ENCODE measurements at regions of chr15 and their contacts with region 1.

Region 1: DNA sequence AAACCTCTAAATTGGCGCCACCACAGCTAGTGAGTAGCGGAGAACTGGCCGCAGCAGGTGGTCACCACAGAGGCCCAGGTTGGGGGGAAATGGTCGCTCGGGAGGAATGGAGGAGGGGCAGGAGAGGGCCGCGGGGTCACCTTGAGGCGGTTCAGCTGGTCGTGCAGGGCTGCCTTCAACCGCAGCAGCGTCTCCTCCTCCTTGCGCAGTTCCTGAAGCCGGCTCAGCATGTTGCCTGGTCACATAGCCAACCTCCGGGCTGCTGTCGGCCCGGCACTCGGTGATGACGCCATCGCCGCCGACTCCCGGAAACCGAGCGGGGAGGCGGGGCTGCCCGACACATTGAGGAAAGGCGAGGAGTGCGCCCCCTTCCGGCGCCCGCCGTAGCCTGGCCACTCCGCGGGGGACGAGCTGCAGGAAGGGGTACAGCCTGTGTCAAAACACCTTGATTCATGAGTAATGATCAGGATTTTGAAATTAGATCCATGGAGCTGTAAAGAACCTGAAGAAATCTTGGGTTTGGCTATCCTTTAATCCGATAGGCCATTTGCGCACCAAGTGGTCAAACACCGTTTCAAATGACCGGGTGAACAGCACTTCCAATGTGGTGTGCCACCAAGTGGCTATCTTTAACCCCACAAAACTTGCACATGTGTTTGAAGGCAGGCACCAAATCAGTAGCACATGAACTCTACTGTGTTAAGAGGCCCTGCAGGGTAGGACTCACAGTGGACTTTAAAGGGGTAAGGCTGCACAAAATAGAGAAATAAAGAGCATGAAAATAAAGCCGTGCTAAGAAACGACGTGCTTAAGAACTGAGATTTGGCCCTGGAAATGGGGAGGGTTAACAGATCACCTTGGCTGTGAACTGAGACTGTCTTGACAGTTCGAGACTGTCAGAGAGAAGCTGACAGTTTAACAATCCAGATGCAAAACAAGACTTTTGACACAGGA is at the start of gene SNAPC5:
- DNase-seq: peak; percentile 99
- H3K4me3 Mint-ChIP-seq: peak within 1 kb of the TSS; percentile 88
- H3K27ac Mint-ChIP-seq: peak within 1 kb of the TSS; percentile 92
- H3K4me1 Mint-ChIP-seq: peaks cover 63% of the 10 kb centered on the region
- H3K27me3 Mint-ChIP-seq: no peaks in the 10 kb centered on the region
- total RNA-seq, gene SNAPC5: 23.4 to 25.3 TPM

Region 2: DNA sequence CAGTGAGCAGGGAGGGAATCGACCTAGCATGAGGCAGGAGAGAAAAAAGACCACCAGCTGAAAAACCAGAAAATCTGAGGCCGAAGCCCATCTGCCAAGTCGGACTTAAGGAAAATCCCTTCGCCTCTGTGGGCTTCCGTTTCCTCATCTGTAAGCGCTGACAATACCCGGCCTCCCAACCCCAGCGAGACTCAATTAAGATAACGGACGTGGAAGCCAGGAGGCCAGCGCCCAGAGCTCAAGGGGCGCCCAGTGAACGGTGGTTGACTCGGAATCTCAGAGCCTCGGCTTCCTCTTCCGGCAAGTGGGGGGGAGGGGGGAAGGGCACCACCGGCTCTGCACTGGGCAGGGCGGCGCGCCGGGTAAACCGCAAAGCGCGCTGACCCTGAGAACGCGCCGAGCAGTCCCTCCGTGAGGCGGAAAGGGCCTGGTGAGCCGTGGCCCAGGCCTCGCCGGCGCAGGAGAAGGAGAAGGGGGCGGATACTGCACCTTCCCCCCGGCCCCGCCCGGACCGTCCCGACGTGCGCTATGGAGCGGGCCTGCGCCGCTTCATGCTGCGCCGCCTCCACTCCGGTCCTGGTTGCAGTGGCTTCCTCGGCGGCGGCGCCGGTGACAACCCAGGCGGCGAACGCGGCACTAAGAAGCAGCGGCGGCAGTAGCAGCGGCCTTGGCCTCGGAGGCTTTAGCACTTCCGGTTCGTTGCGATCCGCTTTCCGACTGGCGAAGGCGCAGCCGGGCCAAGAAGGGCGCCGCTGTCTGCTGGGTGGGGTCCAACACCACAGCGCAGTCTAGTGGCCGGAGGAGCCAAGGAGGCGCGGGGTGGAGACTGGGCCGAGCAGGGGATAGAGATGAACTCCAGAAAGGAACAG is 980.5 kb before region 1 on chr15 and contains the start of gene DPP8:
- CTCF ChIA-PET with region 1: no interaction called
- POLR2A ChIA-PET with region 1: no interaction called
- intact Hi-C with region 1: loop called (anchors 1 kb)
- DNase-seq: peak; percentile 97
- H3K4me3 Mint-ChIP-seq: peak within 1 kb of the TSS; percentile 99
- H3K27ac Mint-ChIP-seq: peak within 1 kb of the TSS; percentile 97
- H3K4me1 Mint-ChIP-seq: peaks cover 42% of the 10 kb centered on the region
- H3K27me3 Mint-ChIP-seq: no peaks in the 10 kb centered on the region
- total RNA-seq, gene DPP8: 24.9 to 27.1 TPM

Region 3: DNA sequence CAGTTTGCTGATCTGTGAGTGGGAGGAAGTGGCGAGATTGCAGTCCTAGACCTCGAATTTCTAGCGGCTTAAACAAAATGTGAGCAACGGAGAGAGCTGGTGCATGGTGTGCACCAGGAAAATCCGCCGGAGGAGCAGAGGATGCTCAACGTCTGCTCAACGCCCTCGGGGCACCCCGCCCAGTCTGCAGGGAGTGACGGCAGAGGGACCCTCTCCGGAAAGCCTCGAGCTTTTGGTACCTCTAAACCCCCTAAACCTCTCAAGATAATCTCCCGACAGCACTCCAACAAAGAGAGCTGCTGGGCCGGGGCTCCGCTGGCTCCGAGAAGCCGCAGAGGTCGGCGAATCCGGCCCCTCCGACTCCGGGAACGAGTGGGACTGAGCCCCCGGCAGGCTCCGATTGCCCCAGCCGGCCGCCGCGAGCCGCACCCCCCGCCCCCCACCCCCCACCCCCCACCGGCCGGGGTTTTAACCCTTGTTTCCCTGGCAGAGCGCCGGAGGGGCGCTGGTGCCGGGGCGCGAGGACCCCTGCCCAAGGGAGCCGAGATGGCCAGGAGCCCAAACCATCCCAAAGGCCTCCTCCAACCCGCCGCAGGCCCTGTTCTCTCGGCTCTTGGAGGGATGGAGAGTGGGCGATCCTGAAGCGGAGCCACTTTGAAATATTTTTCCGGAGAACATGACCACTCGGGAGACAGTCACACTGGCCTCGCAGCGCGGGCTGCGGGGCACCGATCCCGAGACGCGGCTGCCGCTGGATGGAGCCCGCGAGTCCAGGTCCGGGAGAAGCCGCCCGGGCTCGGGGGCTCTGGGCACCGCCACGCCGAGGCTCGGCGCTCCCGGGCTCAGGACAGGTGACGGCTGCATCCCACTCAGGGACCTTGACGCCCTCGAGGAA is 245.7 kb before region 1 on chr15:
- CTCF ChIA-PET with region 1: no interaction called
- POLR2A ChIA-PET with region 1: no interaction called
- intact Hi-C with region 1: loop called (anchors 5 kb)
- DNase-seq: peak; percentile 65
- H3K4me3 Mint-ChIP-seq: peak overlapping the region; percentile 60
- H3K27ac Mint-ChIP-seq: no peak overlapping the region
- H3K4me1 Mint-ChIP-seq: peaks cover 9% of the 10 kb centered on the region
- H3K27me3 Mint-ChIP-seq: peaks cover 58% of the 10 kb centered on the region

Region 4: GRCh38 chr15:66293419-66294156 is 204.2 kb before region 1 on chr15 and contains the start of gene DIS3L:
- CTCF ChIA-PET with region 1: interaction called, 3 read pairs
- POLR2A ChIA-PET with region 1: interaction called, 6 read pairs
- intact Hi-C with region 1: loop called (anchors 2 kb)
- DNase-seq: peak; percentile 68
- H3K4me3 Mint-ChIP-seq: peak within 1 kb of the TSS; percentile 84
- H3K27ac Mint-ChIP-seq: peak within 1 kb of the TSS; percentile 89
- H3K4me1 Mint-ChIP-seq: peaks cover 39% of the 10 kb centered on the region
- H3K27me3 Mint-ChIP-seq: no peaks in the 10 kb centered on the region
- total RNA-seq, gene DIS3L: 23.5 to 26.3 TPM

Region 5: GRCh38 chr15:66356345-66357236 is 141.2 kb before region 1 on chr15 and contains the start of gene TIPIN:
- CTCF ChIA-PET with region 1: interaction called, 43 read pairs
- POLR2A ChIA-PET with region 1: interaction called, 26 read pairs
- intact Hi-C with region 1: loop called (anchors 1 kb)
- DNase-seq: peak; percentile 99
- H3K4me3 Mint-ChIP-seq: peak within 1 kb of the TSS; percentile 93
- H3K27ac Mint-ChIP-seq: peak within 1 kb of the TSS; percentile 91
- H3K4me1 Mint-ChIP-seq: peaks cover 25% of the 10 kb centered on the region
- H3K27me3 Mint-ChIP-seq: no peaks in the 10 kb centered on the region
- total RNA-seq, gene TIPIN: 43.2 to 45.9 TPM

Region 6: DNA sequence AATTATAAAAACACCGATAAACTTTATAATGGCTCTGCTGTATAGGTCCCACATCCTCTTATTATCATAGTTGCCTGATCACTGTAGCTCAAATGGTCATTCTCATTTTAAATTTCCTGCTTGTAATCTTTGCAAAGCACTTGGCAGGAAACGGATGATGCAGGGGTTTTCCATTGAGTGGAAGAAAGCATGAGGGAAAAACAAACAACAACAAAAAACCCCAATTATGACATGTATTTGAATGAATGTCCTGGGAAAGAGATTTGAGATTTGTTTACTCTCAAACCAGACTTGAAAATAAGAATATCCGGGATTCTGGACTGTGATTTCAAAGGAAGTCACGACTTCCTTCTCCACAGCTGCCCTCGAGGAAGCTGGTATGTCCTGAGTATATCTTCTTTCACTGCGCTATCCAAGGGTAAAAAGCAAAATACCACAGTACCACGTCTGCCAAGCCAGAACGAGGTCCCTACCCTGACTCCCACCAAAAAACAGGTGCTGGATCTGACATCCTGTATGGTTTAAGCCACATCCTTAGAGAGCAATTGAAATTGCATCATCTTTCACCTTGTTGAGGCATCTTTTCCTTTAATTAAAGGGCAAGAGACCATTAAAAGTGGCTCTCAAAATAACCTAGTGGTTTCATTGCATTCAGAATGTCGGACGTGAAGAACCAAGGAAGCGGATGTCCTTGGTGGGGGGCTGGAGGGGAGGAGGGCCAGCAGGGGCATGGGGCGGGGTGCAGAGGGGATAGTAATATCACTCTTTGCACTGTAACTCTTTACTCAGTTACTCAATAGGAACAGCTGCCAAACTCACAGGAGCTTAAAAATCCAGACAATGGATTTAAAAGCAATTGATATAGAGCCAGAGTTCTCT is 127.8 kb before region 1 on chr15:
- CTCF ChIA-PET with region 1: no interaction called
- POLR2A ChIA-PET with region 1: interaction called, 4 read pairs
- intact Hi-C with region 1: loop called (anchors 5 kb)
- DNase-seq: peak; percentile 66
- H3K4me3 Mint-ChIP-seq: peak overlapping the region; percentile 69
- H3K27ac Mint-ChIP-seq: peak overlapping the region; percentile 98
- H3K4me1 Mint-ChIP-seq: peaks cover 15% of the 10 kb centered on the region
- H3K27me3 Mint-ChIP-seq: no peaks in the 10 kb centered on the region

Region 7: GRCh38 chr15:66401130-66402021 is 96.4 kb before region 1 on chr15:
- CTCF ChIA-PET with region 1: interaction called, 11 read pairs
- POLR2A ChIA-PET with region 1: no interaction called
- intact Hi-C with region 1: no loop called
- DNase-seq: peak; percentile 33
- H3K4me3 Mint-ChIP-seq: peak overlapping the region; percentile 42
- H3K27ac Mint-ChIP-seq: peak overlapping the region; percentile 18
- H3K4me1 Mint-ChIP-seq: peaks cover 74% of the 10 kb centered on the region
- H3K27me3 Mint-ChIP-seq: no peaks in the 10 kb centered on the region

Region 8: DNA sequence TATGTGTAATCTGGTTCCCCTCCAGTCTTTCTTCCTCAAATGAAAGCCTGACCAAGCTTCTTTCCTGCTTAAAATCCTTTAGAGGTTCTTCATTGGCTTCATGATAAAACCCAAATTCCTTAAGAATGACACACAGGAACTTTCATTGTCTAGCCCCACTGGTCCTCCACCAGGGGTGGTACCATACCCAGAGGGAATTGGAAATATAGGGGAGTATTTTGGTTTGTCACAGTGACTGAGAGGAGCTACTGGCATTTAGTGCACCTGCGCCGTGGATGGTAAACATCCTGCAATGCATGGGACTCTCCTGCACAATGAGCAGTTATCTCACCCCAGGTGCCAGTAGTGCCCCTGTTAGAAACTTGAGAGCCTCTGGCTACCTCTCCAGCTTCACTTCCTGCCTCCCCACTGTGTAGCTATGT is 18.1 kb after region 1 on chr15:
- CTCF ChIA-PET with region 1: no interaction called
- POLR2A ChIA-PET with region 1: no interaction called
- intact Hi-C with region 1: no loop called
- DNase-seq: no peak
- H3K4me3 Mint-ChIP-seq: no peak overlapping the region
- H3K27ac Mint-ChIP-seq: no peak overlapping the region
- H3K4me1 Mint-ChIP-seq: no peaks in the 10 kb centered on the region
- H3K27me3 Mint-ChIP-seq: no peaks in the 10 kb centered on the region